ENCODE measurements at regions of chr11 and their contacts with region 1.

Region 1: DNA sequence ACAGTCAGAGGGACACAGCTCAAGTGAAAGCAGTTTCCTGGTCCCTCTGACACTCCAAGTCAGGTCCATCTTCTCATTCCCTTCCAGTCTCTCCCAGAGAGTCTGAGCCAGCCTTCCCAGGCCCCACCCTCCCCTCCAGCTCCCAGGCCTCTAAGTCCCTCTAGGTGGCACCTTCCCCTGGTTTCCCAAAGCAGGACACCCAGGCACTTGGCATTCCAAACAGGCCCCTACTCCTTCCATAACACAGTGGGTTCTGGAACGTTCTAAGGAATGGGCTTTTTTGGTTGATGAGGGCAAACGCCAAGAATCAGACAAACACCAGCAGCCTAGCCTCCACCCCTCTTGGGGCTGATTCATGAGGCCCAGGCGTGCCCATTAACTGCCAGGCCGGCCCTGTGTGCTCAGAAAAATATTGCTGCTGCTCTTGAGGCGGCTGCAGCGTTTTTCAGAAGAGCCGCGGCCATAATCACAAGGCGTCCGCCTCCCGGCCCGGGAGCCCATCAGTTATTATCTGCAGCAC is 418.7 kb downstream of the SOX6 start:
- DNase-seq: no peak
- H3K4me3 ChIP-seq: no peak overlapping the region
- H3K27ac ChIP-seq: peak overlapping the region; percentile 8 to 44 (median 32)
- H3K4me1 ChIP-seq: peaks cover 0 to 31% (median 10%) of the 10 kb centered on the region in 4 donors
- H3K27me3 ChIP-seq: no peaks in the 10 kb centered on the region
- CTCF ChIP-seq: no peak
- EP300 ChIP-seq: no peak
- POLR2A ChIP-seq: no peak

Region 2: DNA sequence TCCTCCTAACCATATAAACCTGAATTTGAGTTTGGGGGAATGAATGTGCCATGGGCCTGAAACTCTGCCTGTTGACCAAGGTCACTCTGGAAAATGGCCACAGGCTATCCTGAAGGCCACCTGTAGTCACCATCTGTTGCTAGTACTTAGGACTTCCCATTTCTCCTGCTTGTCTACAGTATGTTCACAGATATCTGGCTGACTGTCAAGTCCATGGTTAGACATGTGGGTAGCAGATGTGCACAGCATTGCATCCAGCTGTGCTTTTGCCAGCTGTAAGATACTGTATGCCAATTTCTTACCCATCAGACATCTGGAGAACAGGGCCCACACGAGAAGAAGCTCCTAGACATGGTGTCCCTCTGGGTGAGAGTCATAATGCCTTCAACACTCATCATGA is 347.5 kb before region 1 on chr11:
- in situ Hi-C with region 1: no loop called
- intact Hi-C with region 1: no loop called
- DNase-seq: no peak
- H3K4me3 ChIP-seq: no peak overlapping the region
- H3K27ac ChIP-seq: no peak overlapping the region
- H3K4me1 ChIP-seq: no peaks in the 10 kb centered on the region
- H3K27me3 ChIP-seq: no peaks in the 10 kb centered on the region
- CTCF ChIP-seq: no peak
- EP300 ChIP-seq: no peak
- POLR2A ChIP-seq: no peak

Region 3: DNA sequence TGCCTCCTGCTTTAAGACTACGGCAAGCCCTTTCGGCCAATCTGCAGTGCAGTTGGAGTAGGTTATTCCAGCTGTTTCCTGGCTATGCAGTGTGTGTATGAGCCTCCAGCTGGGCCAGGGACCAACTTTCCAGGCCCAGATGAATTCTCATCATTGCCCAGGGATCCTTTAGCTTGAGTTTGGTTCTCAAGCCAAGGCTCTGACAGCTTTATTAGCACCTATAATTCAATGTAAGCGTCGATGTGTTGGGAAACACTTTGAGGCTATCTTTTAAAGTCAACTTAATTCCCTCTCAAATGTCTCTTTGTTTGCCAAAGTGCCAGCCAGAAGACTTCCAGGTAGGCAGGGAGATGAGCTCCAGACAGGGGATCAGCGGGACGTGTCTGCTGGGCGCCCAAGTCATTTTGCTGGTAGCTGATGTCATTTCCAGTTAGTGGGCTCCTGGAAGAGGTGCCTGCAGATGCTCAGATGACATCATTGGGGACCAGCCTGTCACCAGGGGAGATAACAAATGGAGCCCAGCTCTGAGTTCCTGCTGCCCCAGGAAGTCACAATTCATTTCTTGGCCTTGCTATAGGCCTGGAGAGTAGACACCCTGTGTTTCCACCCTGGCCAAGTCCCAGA is 101.8 kb before region 1 on chr11:
- in situ Hi-C with region 1: no loop called
- intact Hi-C with region 1: loop called (anchors 5 kb)
- DNase-seq: peak; percentile 26
- H3K4me3 ChIP-seq: no peak overlapping the region
- H3K27ac ChIP-seq: peak overlapping the region in 1 of 4 donors; percentile 35
- H3K4me1 ChIP-seq: peaks cover 3 to 28% (median 17%) of the 10 kb centered on the region in 4 donors
- H3K27me3 ChIP-seq: no peaks in the 10 kb centered on the region
- CTCF ChIP-seq: no peak
- EP300 ChIP-seq: peak; percentile 59
- POLR2A ChIP-seq: no peak

Measured in transverse colon (tissue), 4 donors.